Lower leg skin (tissue), 4 donors: ENCODE measurements at regions of chr1 and their contacts with region 1.

Region 1: DNA sequence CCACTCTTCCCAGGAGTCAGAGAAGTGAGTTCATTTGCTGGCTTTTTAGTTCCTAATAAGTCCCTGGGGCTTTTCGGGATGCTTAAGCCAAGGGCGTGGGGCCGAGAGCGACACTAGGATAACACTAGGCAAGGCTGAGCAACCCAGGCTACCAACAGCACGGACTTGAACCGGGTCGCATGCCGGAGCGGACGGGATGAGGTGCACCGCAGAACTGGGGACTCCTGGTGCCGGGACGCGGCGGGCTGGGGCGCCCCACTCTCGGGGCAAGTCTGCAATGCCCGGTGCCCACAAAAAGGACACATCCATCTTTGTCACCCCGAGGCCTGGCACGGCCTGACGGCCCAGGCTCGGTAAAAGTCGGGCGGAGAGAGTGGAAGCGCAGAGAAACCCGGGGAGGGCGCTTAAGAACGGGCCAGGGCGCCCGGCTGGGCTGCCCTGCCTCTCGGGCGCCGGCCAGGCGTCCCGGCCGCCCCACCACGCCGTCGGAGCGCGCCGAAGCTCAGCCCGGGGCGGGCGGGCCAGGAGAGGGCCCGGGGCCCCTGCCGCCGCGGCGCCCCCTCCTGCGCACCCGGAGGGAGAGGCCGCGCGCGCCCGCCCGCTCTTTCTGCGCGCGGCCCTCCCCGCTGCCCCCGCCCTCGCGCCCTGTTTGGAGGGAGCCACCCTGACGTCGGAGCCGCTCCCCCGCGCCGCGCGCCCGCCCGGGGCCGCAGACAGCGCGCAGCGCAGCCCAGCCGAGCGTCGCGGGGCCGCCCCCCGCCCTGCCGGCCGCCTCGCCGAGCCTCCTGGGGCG is at the start of gene NBL1:
- DNase-seq: peak in 1 of 2 donors; percentile 94
- H3K4me3 ChIP-seq: peak within 1 kb of the TSS; percentile 70
- CTCF ChIP-seq: no peak
- POLR2A ChIP-seq: no peak
- total RNA-seq, gene NBL1: 147 to 230 (median 210) TPM

Region 2: DNA sequence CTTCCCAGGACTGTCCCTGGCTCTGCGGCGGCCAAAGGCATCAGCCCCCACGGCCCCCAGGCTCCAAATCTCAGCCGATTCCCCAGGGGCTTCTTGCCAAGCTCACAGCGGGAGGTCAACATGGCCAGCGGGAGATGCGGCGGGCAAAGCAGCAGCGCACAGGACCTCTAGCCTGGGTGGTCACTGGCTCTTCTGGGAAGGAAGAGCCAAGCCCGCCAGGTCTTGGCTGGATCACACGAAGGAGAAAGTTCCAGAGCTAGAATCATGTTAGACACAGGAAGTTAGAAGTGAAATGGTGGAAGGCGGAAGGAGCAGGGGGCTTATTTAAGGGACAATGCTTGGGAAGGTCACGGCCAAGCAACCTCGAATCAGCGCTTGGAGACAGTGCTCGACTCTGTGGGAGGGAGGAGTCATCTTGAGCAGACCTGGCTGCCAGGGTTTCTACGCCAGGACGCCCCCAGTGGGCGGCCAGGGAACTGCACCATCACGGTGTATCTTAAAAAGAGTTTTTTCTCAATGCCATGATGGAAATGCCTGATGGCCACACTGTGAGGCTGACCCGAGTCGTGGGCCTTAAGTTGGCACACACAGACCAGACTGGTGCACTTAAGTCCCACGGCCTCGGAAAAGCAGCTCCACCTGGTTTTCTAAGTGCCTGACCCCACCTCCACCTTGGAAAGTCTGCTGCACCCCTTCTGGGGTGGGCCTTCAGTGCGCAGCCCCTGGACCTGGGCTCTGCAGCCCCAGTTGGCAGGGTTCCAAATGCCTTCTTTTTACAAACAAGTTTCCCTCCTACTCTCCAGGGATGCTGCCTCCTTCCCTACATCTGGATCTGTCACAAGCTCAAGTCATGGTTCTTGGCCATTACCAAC is 302.4 kb before region 1 on chr1:
- intact Hi-C with region 1: loop called (anchors 5 kb)
- DNase-seq: peak; percentile 55 to 95
- H3K4me3 ChIP-seq: no peak overlapping the region
- CTCF ChIP-seq: peak in 1 of 3 donors; percentile 79
- POLR2A ChIP-seq: no peak

Region 3: DNA sequence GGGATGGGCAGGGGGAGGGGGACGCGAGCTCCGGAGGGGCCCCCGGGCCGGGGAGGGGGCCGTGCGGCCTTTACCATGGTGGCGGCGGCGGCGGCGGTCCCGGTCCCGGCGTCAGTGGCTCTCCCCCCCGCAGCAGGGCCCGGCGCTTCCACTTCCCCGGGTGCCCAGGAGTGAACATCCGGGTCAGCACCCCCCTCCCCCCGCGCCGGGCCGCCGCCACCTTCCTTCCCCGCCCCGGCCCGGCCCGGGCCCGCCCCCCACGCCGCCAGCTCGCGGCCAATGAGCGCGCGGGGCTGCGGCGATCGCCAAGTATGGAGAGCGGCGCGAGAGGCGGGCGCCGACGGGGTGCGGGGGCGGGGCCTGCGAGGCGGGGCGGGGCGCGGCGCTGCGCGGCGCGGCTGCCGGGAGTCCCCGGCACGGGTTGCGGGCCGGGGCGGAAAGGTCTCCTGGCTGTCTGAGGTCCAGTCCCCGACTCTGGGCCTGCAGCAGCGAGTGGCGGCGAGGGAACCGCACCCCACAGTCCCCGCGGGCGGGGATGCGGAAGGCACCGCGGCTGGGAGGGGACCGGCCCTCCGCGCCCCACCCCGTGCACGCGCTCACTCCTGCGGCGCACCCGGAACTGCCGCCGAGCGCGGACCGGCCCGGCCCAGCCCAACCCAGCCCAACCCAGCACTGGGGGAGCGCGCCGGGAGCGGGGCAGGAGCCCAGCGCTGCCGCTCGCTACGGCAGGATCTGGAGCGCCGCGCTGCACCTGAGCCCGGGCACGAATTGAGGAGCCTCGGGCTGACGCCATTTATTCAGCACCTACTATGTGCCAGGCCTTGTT is 158.2 kb before region 1 on chr1 and contains the start of gene CAPZB:
- intact Hi-C with region 1: loop called (anchors 10 kb)
- DNase-seq: peak; percentile 92 to 99
- H3K4me3 ChIP-seq: peak within 1 kb of the TSS; percentile 97
- CTCF ChIP-seq: no peak
- POLR2A ChIP-seq: peak in 1 of 2 donors; percentile 11
- total RNA-seq, gene CAPZB: 84.7 to 124 (median 103) TPM

Region 4: GRCh38 chr1:19957779-19958178 is 314.0 kb after region 1 on chr1:
- intact Hi-C with region 1: no loop called
- DNase-seq: no peak
- H3K4me3 ChIP-seq: no peak overlapping the region
- CTCF ChIP-seq: no peak
- POLR2A ChIP-seq: no peak

Region 5: GRCh38 chr1:20151906-20152598 is 508.3 kb after region 1 on chr1:
- intact Hi-C with region 1: no loop called
- DNase-seq: peak; percentile 73 to 97
- H3K4me3 ChIP-seq: no peak overlapping the region
- CTCF ChIP-seq: peak in 2 of 3 donors; percentile 32 to 76
- POLR2A ChIP-seq: no peak